Lower leg skin (tissue), 4 donors: ENCODE measurements at regions of chr7 and their contacts with region 1.

Region 1: DNA sequence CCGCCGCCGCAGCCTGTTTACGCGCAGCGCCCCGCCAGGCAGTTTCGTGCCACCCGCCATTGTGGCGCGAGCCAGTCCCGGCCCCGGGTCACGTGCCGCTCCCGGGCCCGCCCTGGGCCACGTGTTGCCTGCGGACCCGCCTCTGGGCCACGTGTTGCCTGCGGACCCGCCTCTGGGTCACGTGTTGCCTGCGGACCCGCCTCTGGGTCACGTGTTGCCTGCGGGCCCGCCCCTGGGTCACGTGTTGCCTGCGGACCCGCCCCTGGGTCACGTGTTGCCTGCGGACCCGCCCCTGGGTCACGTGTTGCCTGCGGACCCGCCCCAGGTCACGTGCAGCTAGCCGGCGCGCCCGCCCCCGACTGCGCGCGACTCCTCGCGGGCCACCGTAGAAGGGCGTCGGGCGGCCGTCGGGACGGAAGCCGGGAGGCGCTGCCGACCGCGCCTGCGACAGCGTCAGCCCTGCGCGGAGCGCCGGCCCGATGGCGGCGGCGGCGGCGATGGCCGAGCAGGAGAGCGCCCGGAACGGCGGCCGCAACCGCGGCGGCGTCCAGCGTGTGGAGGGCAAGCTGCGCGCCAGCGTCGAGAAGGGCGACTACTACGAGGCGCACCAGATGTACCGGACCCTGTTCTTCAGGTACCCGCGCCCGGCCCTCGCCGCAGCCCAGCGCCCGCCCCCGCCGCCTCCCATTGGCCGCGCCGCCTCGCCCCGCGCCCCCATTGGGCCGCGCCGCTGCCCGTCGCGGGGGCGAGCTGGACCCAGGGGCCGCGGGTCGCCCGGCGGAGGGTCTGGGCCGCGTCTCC is at the start of gene GET4:
- DNase-seq: peak; percentile 94 to 99
- H3K4me3 ChIP-seq: peak within 1 kb of the TSS; percentile 84
- CTCF ChIP-seq: no peak
- POLR2A ChIP-seq: peak in 1 of 2 donors; percentile 74
- total RNA-seq, gene GET4: 46.1 to 67.7 (median 51.6) TPM

Region 2: GRCh38 chr7:604001-604883 is 272.1 kb before region 1 on chr7:
- intact Hi-C with region 1: no loop called
- DNase-seq: peak; percentile 74 to 96
- H3K4me3 ChIP-seq: no peak overlapping the region
- CTCF ChIP-seq: no peak
- POLR2A ChIP-seq: peak in 1 of 2 donors; percentile 24

Region 3: GRCh38 chr7:786472-787255 is 89.7 kb before region 1 on chr7:
- intact Hi-C with region 1: loop called (anchors 2 kb)
- DNase-seq: peak; percentile 65 to 96
- H3K4me3 ChIP-seq: no peak overlapping the region
- CTCF ChIP-seq: peak in 1 of 3 donors; percentile 64
- POLR2A ChIP-seq: no peak

Region 4: DNA sequence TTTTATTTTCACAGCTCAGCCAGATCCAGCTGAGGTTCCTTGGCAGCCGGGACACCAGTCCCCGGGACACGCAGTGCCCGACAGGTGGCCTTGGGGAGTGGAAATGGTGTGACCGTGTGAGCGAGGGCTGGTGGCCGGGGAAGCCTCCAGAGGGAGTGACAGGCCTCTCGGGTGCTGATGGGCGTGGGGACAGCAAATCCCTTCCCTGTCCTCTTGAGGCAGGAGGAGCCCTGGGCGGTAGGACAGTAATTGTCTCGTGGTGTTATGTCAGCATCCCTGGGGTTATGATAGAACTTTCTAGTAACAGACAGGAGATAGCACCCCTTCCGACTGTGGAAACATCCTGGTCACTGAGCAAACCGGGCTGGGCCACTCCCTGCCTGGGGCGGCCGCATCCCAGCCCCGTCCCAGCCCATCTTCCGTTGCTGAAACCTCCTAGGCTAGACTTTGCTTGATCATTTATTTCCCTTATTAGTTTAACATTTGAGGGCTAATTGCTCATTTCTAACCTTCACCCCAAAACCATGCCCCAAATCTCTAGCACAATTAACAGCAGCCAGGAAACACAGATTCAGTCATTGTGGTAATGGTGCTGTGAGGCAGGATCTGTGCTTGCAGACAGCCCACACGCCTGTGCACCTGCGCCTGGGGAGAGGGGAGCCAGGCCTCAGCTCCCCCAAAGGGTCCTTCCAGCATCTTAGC is 857.0 kb after region 1 on chr7:
- intact Hi-C with region 1: no loop called
- DNase-seq: no peak
- H3K4me3 ChIP-seq: no peak overlapping the region
- CTCF ChIP-seq: no peak
- POLR2A ChIP-seq: no peak